GM12878 (cell line): ENCODE measurements at regions of chr14 and their contacts with region 1.

Region 1: GRCh38 chr14:50116181-50116956 is at the start of gene VCPKMT:
- DNase-seq: peak; percentile 62
- ATAC-seq: peak; percentile 97
- H3K4me3 ChIP-seq: peak within 1 kb of the TSS; percentile 76
- H3K27ac ChIP-seq: peak within 1 kb of the TSS; percentile 84
- H3K4me1 ChIP-seq: peaks cover 8% of the 10 kb centered on the region
- H3K27me3 ChIP-seq: no peaks in the 10 kb centered on the region
- CTCF ChIP-seq: no peak
- EP300 ChIP-seq: 0 out of 4 replicates have a peak, but pooled peaks of 1 of the 2 experiments have one; percentile 13
- POLR2A ChIP-seq: peak; percentile 93
- RAD21 ChIP-seq: no peak
- polyA plus RNA-seq, gene VCPKMT: 8.5 to 11.5 TPM

Region 2: DNA sequence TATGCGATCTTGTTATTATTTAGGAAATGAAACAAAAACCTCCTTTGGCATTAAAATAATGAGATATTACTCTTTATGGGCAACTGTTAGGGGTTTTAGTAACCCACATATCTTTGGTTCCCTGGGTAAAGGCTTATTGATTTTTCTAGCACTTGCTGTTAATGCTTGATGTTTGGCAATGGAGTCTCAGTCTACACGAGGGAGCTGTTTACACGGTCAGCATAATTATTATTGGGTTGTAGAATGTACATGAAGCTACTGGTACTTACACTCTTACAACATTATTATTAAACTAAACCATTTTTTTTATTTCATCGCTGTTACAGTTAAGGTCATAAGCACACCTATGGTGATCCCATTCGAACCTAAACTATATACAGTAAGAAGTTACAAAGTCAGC is 542.3 kb before region 1 on chr14:
- CTCF ChIA-PET with region 1: no interaction called
- POLR2A ChIA-PET with region 1: no interaction called
- RAD21 ChIA-PET with region 1: no interaction called
- SMC1A ChIA-PET with region 1: no interaction called
- in situ Hi-C with region 1: no loop called
- intact Hi-C with region 1: no loop called
- DNase-seq: no peak
- ATAC-seq: no peak
- H3K4me3 ChIP-seq: no peak overlapping the region
- H3K27ac ChIP-seq: no peak overlapping the region
- H3K4me1 ChIP-seq: no peaks in the 10 kb centered on the region
- H3K27me3 ChIP-seq: no peaks in the 10 kb centered on the region
- CTCF ChIP-seq: no peak
- EP300 ChIP-seq: no peak
- POLR2A ChIP-seq: no peak
- RAD21 ChIP-seq: no peak

Region 3: DNA sequence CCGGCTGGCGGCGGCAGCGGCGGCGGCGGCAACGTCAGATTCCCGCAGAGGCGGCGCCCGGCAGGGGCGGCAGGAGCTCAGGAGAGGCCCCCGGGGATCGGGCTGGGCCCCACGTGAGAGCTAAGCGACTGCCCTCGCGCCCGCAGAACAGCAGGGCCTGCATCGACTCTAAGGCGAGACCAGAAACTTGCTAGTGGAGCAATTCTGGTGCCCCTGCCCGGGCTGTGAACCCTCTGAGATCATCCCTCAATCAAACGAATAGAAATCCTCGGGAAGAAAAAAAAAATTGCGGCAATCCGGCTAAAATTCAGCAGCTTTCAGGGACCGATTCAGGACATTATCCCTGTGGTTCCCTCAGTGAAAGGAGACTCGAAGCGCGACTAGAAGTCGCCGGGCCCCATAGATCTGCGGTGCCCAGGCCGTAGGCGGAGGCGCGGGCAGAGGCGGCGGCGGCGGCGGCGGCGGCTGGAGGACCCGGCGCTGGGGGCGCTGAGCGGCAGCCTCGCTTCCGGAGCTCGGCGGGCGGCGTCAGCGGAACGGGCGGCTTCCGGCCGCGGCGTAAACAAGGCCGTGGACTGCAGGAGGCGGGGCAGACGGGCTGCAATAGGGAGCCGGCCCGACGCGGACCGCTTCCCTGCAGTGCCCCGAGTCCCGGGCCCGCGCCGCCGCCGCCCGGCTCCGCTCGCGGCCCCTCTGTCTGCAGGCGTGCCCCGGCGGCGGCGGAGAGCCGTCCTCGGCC is 348.6 kb before region 1 on chr14 and contains the start of gene KLHDC2:
- CTCF ChIA-PET with region 1: interaction called, 3 read pairs
- POLR2A ChIA-PET with region 1: interaction called, 4 read pairs
- RAD21 ChIA-PET with region 1: no interaction called
- SMC1A ChIA-PET with region 1: interaction called, 3 read pairs
- in situ Hi-C with region 1: no loop called
- intact Hi-C with region 1: loop called (anchors 10 kb)
- DNase-seq: no peak
- ATAC-seq: peak; percentile 94
- H3K4me3 ChIP-seq: peak within 1 kb of the TSS; percentile 93
- H3K27ac ChIP-seq: peak within 1 kb of the TSS; percentile 93
- H3K4me1 ChIP-seq: peaks cover 7% of the 10 kb centered on the region
- H3K27me3 ChIP-seq: no peaks in the 10 kb centered on the region
- CTCF ChIP-seq: peak in 1 of 3 experiments; percentile 54; a peak in 2 of 6 replicates
- EP300 ChIP-seq: no peak
- POLR2A ChIP-seq: peak; percentile 81
- RAD21 ChIP-seq: no peak
- polyA plus RNA-seq, gene KLHDC2: 6.0 to 13.3 TPM

Region 4: DNA sequence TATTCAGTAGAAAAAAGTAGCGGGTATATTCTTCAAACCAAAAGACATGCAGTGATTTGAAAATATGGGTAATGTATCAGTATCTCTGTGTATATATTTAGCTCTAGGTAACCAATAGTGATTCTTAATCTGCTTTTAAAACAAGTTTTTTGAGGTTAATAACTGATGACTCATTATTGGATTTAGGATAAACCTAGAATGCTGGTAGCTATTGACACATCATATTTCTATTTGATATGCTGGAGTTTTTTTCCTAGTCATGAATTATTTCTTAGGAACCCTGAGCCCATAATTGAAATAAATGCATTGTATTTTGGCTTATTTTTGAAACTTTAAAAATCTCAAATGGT is 208.0 kb before region 1 on chr14:
- CTCF ChIA-PET with region 1: no interaction called
- POLR2A ChIA-PET with region 1: interaction called, 11 read pairs
- RAD21 ChIA-PET with region 1: no interaction called
- SMC1A ChIA-PET with region 1: no interaction called
- in situ Hi-C with region 1: no loop called
- intact Hi-C with region 1: no loop called
- DNase-seq: no peak
- ATAC-seq: no peak
- H3K4me3 ChIP-seq: no peak overlapping the region
- H3K27ac ChIP-seq: no peak overlapping the region
- H3K4me1 ChIP-seq: no peaks in the 10 kb centered on the region
- H3K27me3 ChIP-seq: no peaks in the 10 kb centered on the region
- CTCF ChIP-seq: no peak
- EP300 ChIP-seq: no peak
- POLR2A ChIP-seq: no peak
- RAD21 ChIP-seq: no peak

Region 5: DNA sequence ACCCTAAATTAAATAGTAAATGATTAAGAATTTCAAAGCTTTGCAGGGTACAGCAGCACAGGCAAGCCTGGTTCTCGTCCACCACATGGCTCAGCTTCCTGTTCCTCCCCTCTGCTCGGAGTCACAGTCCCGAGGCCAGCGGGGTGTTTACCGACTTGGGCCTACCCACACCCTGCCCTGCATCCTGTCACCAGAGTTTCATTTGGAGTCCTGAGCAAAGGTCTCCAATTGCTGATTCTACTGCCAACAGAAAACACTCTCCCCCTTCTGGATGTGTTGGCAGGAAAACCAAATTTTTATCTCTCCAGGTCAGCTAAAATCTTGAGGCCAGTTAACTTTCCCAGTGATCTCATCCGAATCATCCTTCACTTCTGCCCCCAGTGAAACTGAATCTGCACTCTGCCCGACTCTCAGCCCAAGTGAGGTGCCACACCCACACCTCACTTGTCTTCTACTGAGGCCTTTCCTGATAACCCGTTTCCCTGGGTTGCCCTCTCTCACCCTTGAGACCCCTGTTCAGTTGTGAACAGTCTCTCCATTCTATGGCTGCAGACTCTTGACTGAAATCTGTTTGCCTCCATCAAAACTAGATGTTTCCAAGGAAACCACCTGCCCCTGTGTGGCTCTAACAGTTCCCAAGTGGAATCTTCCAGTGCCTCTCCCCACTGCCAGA is 71.2 kb before region 1 on chr14:
- CTCF ChIA-PET with region 1: no interaction called
- POLR2A ChIA-PET with region 1: no interaction called
- RAD21 ChIA-PET with region 1: no interaction called
- SMC1A ChIA-PET with region 1: no interaction called
- in situ Hi-C with region 1: no loop called
- intact Hi-C with region 1: no loop called
- DNase-seq: peak; percentile 54
- ATAC-seq: peak; percentile 90
- H3K4me3 ChIP-seq: no peak overlapping the region
- H3K27ac ChIP-seq: peak overlapping the region; percentile 50
- H3K4me1 ChIP-seq: peaks cover 42% of the 10 kb centered on the region
- H3K27me3 ChIP-seq: no peaks in the 10 kb centered on the region
- CTCF ChIP-seq: no peak
- EP300 ChIP-seq: no peak
- POLR2A ChIP-seq: peak; percentile 55; the same call in 1 of the 2 replicates
- RAD21 ChIP-seq: peak; percentile 9; the same call in 1 of the 2 replicates

Region 6: GRCh38 chr14:50099335-50099734 is 17.0 kb before region 1 on chr14:
- CTCF ChIA-PET with region 1: interaction called, 6 read pairs
- POLR2A ChIA-PET with region 1: no interaction called
- RAD21 ChIA-PET with region 1: interaction called, 8 read pairs
- SMC1A ChIA-PET with region 1: interaction called, 12 read pairs
- in situ Hi-C with region 1: no loop called
- intact Hi-C with region 1: no loop called
- DNase-seq: no peak
- ATAC-seq: no peak
- H3K4me3 ChIP-seq: no peak overlapping the region
- H3K27ac ChIP-seq: no peak overlapping the region
- H3K4me1 ChIP-seq: peaks cover 12% of the 10 kb centered on the region
- H3K27me3 ChIP-seq: no peaks in the 10 kb centered on the region
- CTCF ChIP-seq: no peak
- EP300 ChIP-seq: no peak
- POLR2A ChIP-seq: no peak
- RAD21 ChIP-seq: no peak

Region 7: GRCh38 chr14:50231475-50232275 is 115.3 kb after region 1 on chr14 and contains the start of gene SOS2:
- CTCF ChIA-PET with region 1: interaction called, 4 read pairs
- POLR2A ChIA-PET with region 1: interaction called, 3 read pairs
- RAD21 ChIA-PET with region 1: interaction called, 3 read pairs
- SMC1A ChIA-PET with region 1: interaction called, 5 read pairs
- in situ Hi-C with region 1: no loop called
- intact Hi-C with region 1: loop called (anchors 5 kb)
- DNase-seq: peak; percentile 43
- ATAC-seq: peak; percentile 91
- H3K4me3 ChIP-seq: peak within 1 kb of the TSS; percentile 75
- H3K27ac ChIP-seq: peak within 1 kb of the TSS; percentile 73
- H3K4me1 ChIP-seq: no peaks in the 10 kb centered on the region; the same call in 1 of the 2 replicates
- H3K27me3 ChIP-seq: no peaks in the 10 kb centered on the region
- CTCF ChIP-seq: no peak
- EP300 ChIP-seq: no peak
- POLR2A ChIP-seq: peak; percentile 88
- RAD21 ChIP-seq: no peak
- polyA plus RNA-seq, gene SOS2: 2.9 to 4.1 TPM

Region 8: GRCh38 chr14:50532502-50533240 is 416.3 kb after region 1 on chr14 and contains the start of gene MAP4K5:
- CTCF ChIA-PET with region 1: no interaction called
- POLR2A ChIA-PET with region 1: no interaction called
- RAD21 ChIA-PET with region 1: no interaction called
- SMC1A ChIA-PET with region 1: no interaction called
- in situ Hi-C with region 1: no loop called
- intact Hi-C with region 1: loop called (anchors 2 kb)
- DNase-seq: peak; percentile 40
- ATAC-seq: peak; percentile 91
- H3K4me3 ChIP-seq: peak within 1 kb of the TSS; percentile 81
- H3K27ac ChIP-seq: peak within 1 kb of the TSS; percentile 75
- H3K4me1 ChIP-seq: peaks cover 10% of the 10 kb centered on the region
- H3K27me3 ChIP-seq: no peaks in the 10 kb centered on the region
- CTCF ChIP-seq: peak; percentile 89 to 99 (median 92); a peak in 5 of 6 replicates
- EP300 ChIP-seq: 0 out of 4 replicates have a peak, but pooled peaks of 1 of the 2 experiments have one; percentile 16
- POLR2A ChIP-seq: no peak; the same call in 1 of the 2 replicates
- RAD21 ChIP-seq: peak; percentile 96
- polyA plus RNA-seq, gene MAP4K5: 9.1 to 12.0 TPM